Mammary epithelial cell (primary cell): ENCODE measurements at regions of chr21 and their contacts with region 1.

Region 1: GRCh38 chr21:29258626-29259335 is 39.9 kb upstream of the BACH1 start:
- DNase-seq: peak; percentile 77
- H3K4me3 ChIP-seq: no peak overlapping the region
- H3K27ac ChIP-seq: peak overlapping the region; percentile 98
- H3K4me1 ChIP-seq: peaks cover 50% of the 10 kb centered on the region
- H3K27me3 ChIP-seq: no peaks in the 10 kb centered on the region
- CTCF ChIP-seq: no peak

Region 2: GRCh38 chr21:29187944-29188343 is 70.8 kb before region 1 on chr21:
- CTCF ChIA-PET with region 1: no interaction called
- dilution Hi-C with region 1: loop called (anchors 5 kb)
- in situ Hi-C with region 1: no loop called
- intact Hi-C with region 1: loop called (anchors 5 kb)
- DNase-seq: peak; percentile 84
- H3K4me3 ChIP-seq: no peak overlapping the region
- H3K27ac ChIP-seq: peak overlapping the region; percentile 59
- H3K4me1 ChIP-seq: peaks cover 39% of the 10 kb centered on the region
- H3K27me3 ChIP-seq: no peaks in the 10 kb centered on the region
- CTCF ChIP-seq: no peak

Region 3: GRCh38 chr21:29217818-29218291 is 40.9 kb before region 1 on chr21:
- CTCF ChIA-PET with region 1: no interaction called
- dilution Hi-C with region 1: no loop called
- in situ Hi-C with region 1: no loop called
- intact Hi-C with region 1: loop called (anchors 2 kb)
- DNase-seq: peak; percentile 94
- H3K4me3 ChIP-seq: no peak overlapping the region
- H3K27ac ChIP-seq: peak overlapping the region; percentile 32
- H3K4me1 ChIP-seq: peaks cover 14% of the 10 kb centered on the region
- H3K27me3 ChIP-seq: no peaks in the 10 kb centered on the region
- CTCF ChIP-seq: no peak

Region 4: GRCh38 chr21:29237110-29238052 is 21.4 kb before region 1 on chr21:
- CTCF ChIA-PET with region 1: no interaction called
- dilution Hi-C with region 1: no loop called
- in situ Hi-C with region 1: no loop called
- intact Hi-C with region 1: loop called (anchors 2 kb)
- DNase-seq: no peak
- H3K4me3 ChIP-seq: no peak overlapping the region
- H3K27ac ChIP-seq: no peak overlapping the region
- H3K4me1 ChIP-seq: peaks cover 32% of the 10 kb centered on the region
- H3K27me3 ChIP-seq: no peaks in the 10 kb centered on the region
- CTCF ChIP-seq: no peak

Region 5: DNA sequence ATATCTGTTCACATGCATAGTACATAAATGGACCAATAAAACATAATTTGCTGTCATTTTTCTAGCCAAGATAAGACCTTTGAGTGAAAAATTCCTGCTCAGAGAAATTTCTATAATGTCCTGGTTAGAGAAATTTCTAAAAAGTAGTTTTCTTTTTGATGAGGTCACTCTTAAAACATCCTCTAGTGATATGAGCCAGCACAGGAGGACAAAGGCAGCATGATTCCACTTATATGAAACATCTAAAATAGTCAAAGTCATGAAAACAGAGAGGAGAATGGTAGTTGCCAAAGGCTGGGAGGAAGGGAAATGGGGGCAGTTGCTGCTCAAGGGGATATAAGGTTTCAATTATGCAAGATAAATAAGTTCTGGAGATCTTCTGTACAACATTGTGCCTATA is 279.3 kb after region 1 on chr21:
- CTCF ChIA-PET with region 1: no interaction called
- dilution Hi-C with region 1: no loop called
- in situ Hi-C with region 1: no loop called
- intact Hi-C with region 1: no loop called
- DNase-seq: no peak
- H3K4me3 ChIP-seq: no peak overlapping the region
- H3K27ac ChIP-seq: no peak overlapping the region
- H3K4me1 ChIP-seq: no peaks in the 10 kb centered on the region
- H3K27me3 ChIP-seq: no peaks in the 10 kb centered on the region
- CTCF ChIP-seq: no peak